ENCODE measurements at regions of chr4 and their contacts with region 1.

Region 1: DNA sequence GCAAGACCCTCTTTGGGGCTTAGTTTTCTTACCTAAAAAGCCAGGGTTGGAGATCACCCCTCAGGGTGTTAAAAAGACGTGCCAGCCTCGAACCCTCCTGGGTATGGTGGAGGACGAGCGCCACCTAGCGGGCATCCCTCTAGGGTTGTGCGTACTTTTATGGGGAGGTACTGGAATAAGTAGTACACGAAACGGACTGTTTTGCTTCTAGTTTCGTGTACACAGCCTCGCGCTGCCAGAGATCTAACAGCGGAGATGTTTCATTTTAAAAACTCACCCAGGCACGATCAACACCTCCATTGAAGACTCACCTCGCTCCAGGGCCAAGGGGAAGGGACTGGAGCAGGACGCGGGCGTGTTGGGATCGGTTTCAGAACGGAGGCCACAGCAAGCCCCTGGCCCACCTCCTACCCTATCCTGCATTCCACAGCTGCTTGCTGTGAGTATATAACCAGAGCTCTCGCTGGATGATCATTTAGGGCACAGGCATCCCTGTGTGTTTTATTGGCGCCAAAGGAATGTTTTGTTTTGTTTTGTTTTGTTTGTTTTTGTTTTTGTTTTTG is 4.8 kb upstream of the NKX3-2 start:
- DNase-seq: peak; percentile 81 to 99
- H3K4me3 ChIP-seq: peak overlapping the region; percentile 31 to 68 (median 57); a peak in 7 of 8 replicates
- H3K27ac ChIP-seq: no peak overlapping the region
- H3K4me1 ChIP-seq: peaks cover 4 to 8% (median 7%) of the 10 kb centered on the region in 4 experiments
- H3K27me3 ChIP-seq: peaks cover 27 to 60% (median 41%) of the 10 kb centered on the region in 4 experiments
- CTCF ChIP-seq: peak in 2 of 3 experiments; percentile 81 to 91; a peak in 3 of 4 replicates
- EP300 ChIP-seq: no peak
- POLR2A ChIP-seq: no peak
- RAD21 ChIP-seq: peak; percentile 98

Region 2: GRCh38 chr4:13527981-13528820 is 20.9 kb before region 1 on chr4:
- CTCF ChIA-PET with region 1: interaction called, 132 read pairs
- POLR2A ChIA-PET with region 1: interaction called, 37 read pairs
- DNase-seq: peak in 1 of 2 experiments; percentile 63
- H3K4me3 ChIP-seq: peak overlapping the region in 1 of 4 experiments; percentile 39; a peak in 3 of 8 replicates
- H3K27ac ChIP-seq: no peak overlapping the region
- H3K4me1 ChIP-seq: peaks cover 13 to 50% (median 26%) of the 10 kb centered on the region in 4 experiments
- H3K27me3 ChIP-seq: peaks cover 90 to 100% (median 98%) of the 10 kb centered on the region in 4 experiments
- CTCF ChIP-seq: no peak
- EP300 ChIP-seq: no peak
- POLR2A ChIP-seq: no peak
- RAD21 ChIP-seq: no peak

Measured in H1 (cell line).